Activated B cell treated with CpG ODN at 0.5 μM for 24 hours (primary cell): ENCODE measurements at regions of chr19 and their contacts with region 1.

Region 1: GRCh38 chr19:58519355-58520256 is at the start of gene ZBTB45:
- DNase-seq: peak; percentile 88
- ATAC-seq: peak; percentile 83
- H3K4me3 Mint-ChIP-seq: peak within 1 kb of the TSS; percentile 95
- H3K27ac Mint-ChIP-seq: peak within 1 kb of the TSS; percentile 97
- H3K4me1 Mint-ChIP-seq: peaks cover 39% of the 10 kb centered on the region
- H3K27me3 Mint-ChIP-seq: no peaks in the 10 kb centered on the region
- CTCF ChIP-seq: no peak
- total RNA-seq, gene ZBTB45: 18.0 and 20.2 TPM in 2 replicates

Region 2: GRCh38 chr19:58182989-58183816 is 336.4 kb before region 1 on chr19 and contains the start of gene ZNF274:
- CTCF ChIA-PET with region 1: interaction called, 7 read pairs
- POLR2A ChIA-PET with region 1: interaction called, 39 read pairs
- intact Hi-C with region 1: no loop called
- DNase-seq: peak; percentile 93
- ATAC-seq: peak; percentile 84
- H3K4me3 Mint-ChIP-seq: peak within 1 kb of the TSS; percentile 92
- H3K27ac Mint-ChIP-seq: peak within 1 kb of the TSS; percentile 98
- H3K4me1 Mint-ChIP-seq: peaks cover 24% of the 10 kb centered on the region
- H3K27me3 Mint-ChIP-seq: no peaks in the 10 kb centered on the region
- CTCF ChIP-seq: no peak
- total RNA-seq, gene ZNF274: 47.2 and 50.3 TPM in 2 replicates

Region 3: DNA sequence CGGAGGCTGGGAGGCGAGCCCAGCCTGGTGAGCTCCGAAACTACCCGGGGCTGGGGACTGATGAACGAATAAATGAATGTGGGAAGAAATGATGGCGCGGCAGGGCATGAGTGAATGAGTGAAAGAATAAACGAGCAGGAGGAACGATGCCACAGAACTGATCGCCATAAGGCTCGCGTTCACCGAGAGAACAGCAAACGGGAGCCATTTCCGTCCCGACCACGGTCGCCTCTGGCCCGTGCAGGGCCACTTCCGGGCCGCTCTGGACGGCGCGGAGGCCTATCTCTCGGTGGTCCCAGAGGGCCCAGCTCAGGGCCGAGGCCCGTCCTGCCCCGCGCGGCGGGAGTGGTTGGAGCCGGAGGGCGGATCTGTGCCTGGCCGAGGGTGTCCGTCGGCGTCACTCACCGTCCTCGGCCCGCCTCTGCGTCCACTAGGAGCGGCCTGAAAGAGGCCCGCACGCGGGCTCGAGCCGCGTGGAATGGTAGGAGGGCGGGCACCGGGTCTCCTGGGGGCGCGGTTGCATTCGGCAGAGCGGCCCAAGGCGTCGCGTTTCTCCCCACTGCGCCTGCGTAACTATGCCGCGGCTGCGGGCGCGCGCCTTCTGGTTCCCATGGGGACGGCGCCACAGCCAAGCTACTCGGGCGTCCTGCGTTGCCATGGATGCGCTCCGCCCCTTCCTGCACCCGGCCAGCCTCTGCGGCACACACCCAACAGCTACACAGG is 157.2 kb before region 1 on chr19 and contains the start of gene ZNF497:
- CTCF ChIA-PET with region 1: interaction called, 6 read pairs
- POLR2A ChIA-PET with region 1: interaction called, 26 read pairs
- intact Hi-C with region 1: loop called (anchors 1 kb)
- DNase-seq: peak; percentile 98
- ATAC-seq: peak; percentile 86
- H3K4me3 Mint-ChIP-seq: peak within 1 kb of the TSS; percentile 95
- H3K27ac Mint-ChIP-seq: peak within 1 kb of the TSS; percentile 97
- H3K4me1 Mint-ChIP-seq: peaks cover 21% of the 10 kb centered on the region
- H3K27me3 Mint-ChIP-seq: peaks cover 2% of the 10 kb centered on the region
- CTCF ChIP-seq: no peak
- total RNA-seq, gene ZNF497: 1.7 and 2.1 TPM in 2 replicates

Region 4: DNA sequence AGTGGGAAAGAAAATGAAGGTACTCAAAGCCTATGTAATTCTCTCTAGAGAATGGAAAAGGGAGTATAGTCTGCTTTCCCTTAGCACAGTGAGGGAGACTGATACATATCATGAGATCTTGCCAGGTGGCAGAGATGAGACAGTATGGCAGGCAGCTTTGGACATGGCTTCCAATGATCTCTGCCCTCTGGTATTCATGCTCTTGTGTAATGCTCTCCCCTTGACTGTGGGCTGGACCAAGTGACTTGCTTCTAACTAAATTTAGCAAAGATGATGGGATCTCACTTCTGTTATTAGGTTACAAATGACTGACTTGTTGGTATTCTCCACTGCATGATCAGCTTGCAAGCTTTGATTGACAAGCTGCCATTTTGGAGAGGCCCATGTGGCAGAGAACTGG is 89.9 kb before region 1 on chr19:
- CTCF ChIA-PET with region 1: no interaction called
- POLR2A ChIA-PET with region 1: no interaction called
- intact Hi-C with region 1: no loop called
- DNase-seq: no peak
- ATAC-seq: no peak
- H3K4me3 Mint-ChIP-seq: no peak overlapping the region
- H3K27ac Mint-ChIP-seq: no peak overlapping the region
- H3K4me1 Mint-ChIP-seq: no peaks in the 10 kb centered on the region
- H3K27me3 Mint-ChIP-seq: no peaks in the 10 kb centered on the region
- CTCF ChIP-seq: no peak

Region 5: DNA sequence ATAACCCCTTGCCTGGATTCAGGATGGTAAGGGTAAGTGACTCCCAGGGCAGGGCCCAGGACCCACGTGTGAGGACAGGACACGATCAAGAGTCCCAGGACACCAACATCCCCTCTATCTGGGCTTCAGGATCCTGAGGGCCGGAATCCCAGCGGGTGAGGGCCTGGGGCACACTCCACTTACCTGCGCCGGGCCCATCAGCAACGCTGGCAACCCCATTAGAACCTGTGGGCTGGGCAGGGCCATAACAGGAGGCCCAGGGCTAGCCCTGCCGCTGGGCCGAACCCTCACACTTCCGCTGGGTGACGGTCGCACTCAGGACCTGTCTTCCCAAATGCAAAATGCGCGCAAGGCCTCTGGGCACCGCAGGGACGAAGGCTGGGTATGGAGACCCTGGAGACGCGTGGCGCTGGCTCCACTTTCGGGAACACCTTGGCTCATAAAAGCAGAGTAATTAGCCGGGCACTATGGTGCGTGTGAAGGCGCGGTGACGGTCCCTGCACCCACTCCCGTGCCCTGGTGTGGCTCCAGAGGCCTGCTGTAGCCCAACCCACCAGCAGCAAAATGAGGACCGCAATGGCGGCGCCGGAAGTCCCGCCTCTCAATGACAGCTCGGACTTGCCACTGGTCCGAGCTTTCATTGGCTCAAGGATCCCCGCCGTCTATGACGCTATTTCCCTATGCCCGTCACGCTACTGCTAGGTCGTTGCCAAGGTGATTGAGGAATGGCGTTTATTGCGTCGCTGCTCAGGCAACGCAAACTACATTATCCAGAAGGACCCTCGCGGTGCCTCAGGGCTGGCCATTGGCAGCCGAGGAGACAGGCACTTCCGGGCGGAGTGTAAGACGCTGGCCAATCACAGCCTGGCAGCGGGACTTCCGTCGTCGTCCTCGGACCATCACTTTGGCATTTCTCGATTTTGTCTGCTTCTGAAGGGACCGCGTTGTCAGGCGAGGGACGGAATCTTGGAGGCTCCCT is 79.7 kb before region 1 on chr19 and contains the start of gene ZNF132:
- CTCF ChIA-PET with region 1: interaction called, 4 read pairs
- POLR2A ChIA-PET with region 1: interaction called, 7 read pairs
- intact Hi-C with region 1: loop called (anchors 1 kb)
- DNase-seq: peak; percentile 88
- ATAC-seq: peak; percentile 97
- H3K4me3 Mint-ChIP-seq: peak within 1 kb of the TSS; percentile 96
- H3K27ac Mint-ChIP-seq: peak within 1 kb of the TSS; percentile 97
- H3K4me1 Mint-ChIP-seq: peaks cover 20% of the 10 kb centered on the region
- H3K27me3 Mint-ChIP-seq: peaks cover 4% of the 10 kb centered on the region
- CTCF ChIP-seq: no peak
- total RNA-seq, gene ZNF132: 9.2 and 10.4 TPM in 2 replicates

Region 6: GRCh38 chr19:58531034-58531840 is 11.6 kb after region 1 on chr19:
- CTCF ChIA-PET with region 1: interaction called, 5 read pairs
- POLR2A ChIA-PET with region 1: interaction called, 13 read pairs
- intact Hi-C with region 1: no loop called
- DNase-seq: no peak
- ATAC-seq: peak; percentile 31
- H3K4me3 Mint-ChIP-seq: no peak overlapping the region
- H3K27ac Mint-ChIP-seq: no peak overlapping the region
- H3K4me1 Mint-ChIP-seq: peaks cover 25% of the 10 kb centered on the region
- H3K27me3 Mint-ChIP-seq: no peaks in the 10 kb centered on the region
- CTCF ChIP-seq: no peak

Region 7: GRCh38 chr19:58558623-58559274 is 39.1 kb after region 1 on chr19:
- CTCF ChIA-PET with region 1: interaction called, 12 read pairs
- POLR2A ChIA-PET with region 1: interaction called, 69 read pairs
- intact Hi-C with region 1: loop called (anchors 1 kb)
- DNase-seq: peak; percentile 97
- ATAC-seq: peak; percentile 72
- H3K4me3 Mint-ChIP-seq: peak overlapping the region; percentile 97
- H3K27ac Mint-ChIP-seq: peak overlapping the region; percentile 97
- H3K4me1 Mint-ChIP-seq: peaks cover 82% of the 10 kb centered on the region
- H3K27me3 Mint-ChIP-seq: no peaks in the 10 kb centered on the region
- CTCF ChIP-seq: no peak